A549 (cell line): ENCODE measurements at regions of chr12 and their contacts with region 1.

Region 1: DNA sequence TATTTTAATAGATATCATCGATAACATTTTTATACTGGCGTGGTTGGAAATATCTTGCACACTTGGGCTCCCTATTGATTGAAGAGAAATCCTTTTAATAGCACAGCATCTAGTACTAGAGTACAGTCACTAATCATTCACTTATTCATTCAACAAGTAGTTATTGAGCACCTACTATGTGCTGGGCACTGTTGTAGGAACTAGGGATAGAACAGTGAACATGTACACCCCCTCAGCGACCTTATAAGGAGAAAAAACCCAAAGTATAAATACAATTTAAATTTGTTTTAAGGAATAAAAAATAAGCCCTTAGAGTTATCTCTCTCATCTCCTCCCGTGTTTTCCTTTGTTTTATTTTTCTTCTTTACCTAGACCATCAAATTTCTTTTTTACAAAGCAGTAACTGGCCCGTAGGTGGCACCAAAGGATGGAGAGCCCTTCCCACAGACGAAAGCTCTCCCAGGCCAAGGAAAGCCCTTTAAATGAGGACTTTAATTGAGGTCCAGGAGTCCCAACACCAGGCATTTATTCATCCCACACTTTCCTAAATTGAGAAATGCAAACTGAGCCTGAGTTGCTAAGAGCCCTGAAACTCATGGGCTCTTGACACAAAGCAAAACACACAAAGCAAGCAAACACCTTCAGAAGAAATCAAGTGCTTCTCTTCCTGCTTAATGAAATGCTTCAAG is 29.0 kb downstream of the PEBP1 start:
- DNase-seq: peak; percentile 48 to 51
- ATAC-seq: peak; percentile 87 to 89
- H3K4me3 ChIP-seq: no peak overlapping the region
- H3K27ac ChIP-seq: no peak overlapping the region
- H3K4me1 ChIP-seq: no peaks in the 10 kb centered on the region
- CTCF ChIP-seq: peak; percentile 68
- EP300 ChIP-seq: no peak
- POLR2A ChIP-seq: no peak
- RAD21 ChIP-seq: peak; percentile 70 to 82

Region 2: DNA sequence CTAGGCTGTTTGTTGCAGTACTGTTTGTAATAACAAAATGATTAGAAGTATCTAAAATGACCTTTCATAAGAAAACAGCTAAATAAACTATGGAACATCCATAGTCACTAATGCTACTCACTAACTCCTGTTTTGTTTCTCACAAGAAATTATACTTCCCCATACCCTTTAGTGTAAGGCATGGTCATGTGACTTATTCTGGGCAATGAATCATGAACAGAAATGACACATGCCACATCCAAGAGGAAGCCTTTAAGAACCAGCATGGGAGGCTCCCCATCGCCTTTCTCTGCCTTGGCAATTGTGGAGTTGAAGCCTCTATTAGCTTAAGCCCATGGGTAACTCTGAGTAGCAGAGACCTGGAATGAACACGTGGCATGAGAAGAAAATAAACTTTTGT is 245.5 kb before region 1 on chr12:
- CTCF ChIA-PET with region 1: no interaction called
- POLR2A ChIA-PET with region 1: no interaction called
- DNase-seq: no peak
- ATAC-seq: no peak
- H3K4me3 ChIP-seq: no peak overlapping the region
- H3K27ac ChIP-seq: no peak overlapping the region
- H3K4me1 ChIP-seq: no peaks in the 10 kb centered on the region
- CTCF ChIP-seq: no peak
- EP300 ChIP-seq: no peak
- POLR2A ChIP-seq: no peak
- RAD21 ChIP-seq: no peak

Region 3: GRCh38 chr12:118175823-118176447 is 11.0 kb after region 1 on chr12:
- CTCF ChIA-PET with region 1: interaction called, 27 read pairs
- POLR2A ChIA-PET with region 1: no interaction called
- DNase-seq: no peak
- ATAC-seq: no peak
- H3K4me3 ChIP-seq: no peak overlapping the region
- H3K27ac ChIP-seq: no peak overlapping the region
- H3K4me1 ChIP-seq: no peaks in the 10 kb centered on the region
- CTCF ChIP-seq: no peak
- EP300 ChIP-seq: no peak
- POLR2A ChIP-seq: no peak
- RAD21 ChIP-seq: no peak

Region 4: GRCh38 chr12:118187751-118188435 is 23.0 kb after region 1 on chr12:
- CTCF ChIA-PET with region 1: interaction called, 27 read pairs
- POLR2A ChIA-PET with region 1: no interaction called
- DNase-seq: no peak
- ATAC-seq: no peak
- H3K4me3 ChIP-seq: no peak overlapping the region
- H3K27ac ChIP-seq: no peak overlapping the region
- H3K4me1 ChIP-seq: no peaks in the 10 kb centered on the region
- CTCF ChIP-seq: no peak
- EP300 ChIP-seq: no peak
- POLR2A ChIP-seq: no peak
- RAD21 ChIP-seq: no peak

Region 5: DNA sequence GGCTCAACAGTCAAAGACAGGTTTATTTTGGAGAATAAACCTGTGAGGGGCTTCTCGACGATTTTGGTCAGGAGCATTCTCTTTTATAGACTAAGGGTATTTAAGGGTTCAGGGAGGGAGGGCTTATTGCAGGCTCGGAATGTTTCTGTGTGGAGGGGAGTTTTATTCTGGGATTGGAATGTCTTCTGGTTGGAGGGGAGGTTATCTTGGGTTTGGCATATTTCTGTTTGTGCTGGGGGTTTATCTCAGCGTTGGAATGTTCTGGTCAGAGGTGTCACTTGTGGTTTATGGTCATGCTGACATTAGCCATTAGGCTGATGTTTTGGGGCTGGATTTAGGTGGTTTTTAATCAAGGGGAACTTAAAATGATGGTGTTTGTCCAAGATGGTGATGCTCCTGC is 315.3 kb after region 1 on chr12:
- CTCF ChIA-PET with region 1: no interaction called
- POLR2A ChIA-PET with region 1: no interaction called
- DNase-seq: no peak
- ATAC-seq: no peak
- H3K4me3 ChIP-seq: no peak overlapping the region
- H3K27ac ChIP-seq: no peak overlapping the region
- H3K4me1 ChIP-seq: no peaks in the 10 kb centered on the region
- CTCF ChIP-seq: no peak
- EP300 ChIP-seq: no peak
- POLR2A ChIP-seq: no peak
- RAD21 ChIP-seq: no peak